WTC11 (cell line): ENCODE measurements at regions of chr17 and their contacts with region 1.

Region 1: GRCh38 chr17:68613739-68614298 is 12.7 kb upstream of the FAM20A start:
- DNase-seq: peak; percentile 58
- ATAC-seq: peak; percentile 100
- H3K4me3 Mint-ChIP-seq: no peak overlapping the region
- H3K27ac Mint-ChIP-seq: 0 out of 2 replicates have a peak overlapping the region, but pooled peaks have one; percentile 79
- H3K4me1 Mint-ChIP-seq: peaks cover 7% of the 10 kb centered on the region
- H3K27me3 Mint-ChIP-seq: no peaks in the 10 kb centered on the region
- CTCF ChIP-seq: peak; percentile 68

Region 2: DNA sequence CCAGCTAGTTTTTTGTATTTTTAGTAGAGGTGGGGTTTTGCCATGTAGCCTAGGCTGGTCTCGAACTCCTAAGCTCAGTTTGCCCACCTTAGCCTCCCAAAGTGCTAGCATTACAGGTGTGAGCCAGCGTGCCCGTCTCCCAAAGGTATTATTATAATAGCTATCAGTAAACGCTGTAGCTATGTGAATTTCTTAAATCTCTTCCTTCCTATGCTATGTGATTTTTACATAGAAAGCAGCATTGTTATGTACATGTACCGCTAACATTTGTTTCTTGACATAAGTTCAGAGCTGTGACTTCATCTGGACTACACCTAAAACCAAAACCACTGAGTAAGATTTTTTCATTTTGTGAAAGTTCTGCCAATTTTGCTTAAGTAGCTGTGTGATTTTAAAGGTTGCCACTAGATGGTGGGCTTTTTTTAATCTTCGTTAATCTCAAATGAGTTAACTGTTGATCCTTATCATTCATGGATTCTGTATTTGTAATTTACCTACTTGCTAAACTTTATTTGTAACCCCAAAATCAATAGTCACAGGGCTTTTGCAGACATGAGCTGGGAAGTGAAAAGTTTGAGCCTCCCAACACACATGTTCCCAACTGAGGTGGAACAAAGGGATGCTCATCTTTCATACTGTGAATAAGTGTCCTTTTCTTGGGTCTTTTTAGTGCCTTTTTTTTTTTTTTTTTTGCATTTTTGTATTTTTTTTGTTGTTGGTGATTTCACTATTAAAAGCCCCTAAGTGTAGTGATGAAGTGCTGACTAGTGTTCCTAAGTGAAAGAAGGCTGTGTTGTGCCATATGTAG is 79.7 kb before region 1 on chr17:
- CTCF ChIA-PET with region 1: interaction called, 46 read pairs
- POLR2A ChIA-PET with region 1: no interaction called
- DNase-seq: no peak
- ATAC-seq: no peak
- H3K4me3 Mint-ChIP-seq: no peak overlapping the region
- H3K27ac Mint-ChIP-seq: peak overlapping the region; percentile 76
- H3K4me1 Mint-ChIP-seq: no peaks in the 10 kb centered on the region
- H3K27me3 Mint-ChIP-seq: no peaks in the 10 kb centered on the region
- CTCF ChIP-seq: no peak

Region 3: GRCh38 chr17:68539548-68540467 is 74.0 kb before region 1 on chr17:
- CTCF ChIA-PET with region 1: interaction called, 19 read pairs
- POLR2A ChIA-PET with region 1: no interaction called
- DNase-seq: no peak
- ATAC-seq: peak; percentile 81
- H3K4me3 Mint-ChIP-seq: no peak overlapping the region
- H3K27ac Mint-ChIP-seq: no peak overlapping the region
- H3K4me1 Mint-ChIP-seq: no peaks in the 10 kb centered on the region
- H3K27me3 Mint-ChIP-seq: no peaks in the 10 kb centered on the region
- CTCF ChIP-seq: no peak

Region 4: GRCh38 chr17:68600067-68600930 is 13.5 kb before region 1 on chr17:
- CTCF ChIA-PET with region 1: interaction called, 21 read pairs
- POLR2A ChIA-PET with region 1: no interaction called
- DNase-seq: peak; percentile 81
- ATAC-seq: peak; percentile 77
- H3K4me3 Mint-ChIP-seq: peak overlapping the region; percentile 87
- H3K27ac Mint-ChIP-seq: no peak overlapping the region
- H3K4me1 Mint-ChIP-seq: peaks cover 41% of the 10 kb centered on the region
- H3K27me3 Mint-ChIP-seq: peaks cover 47% of the 10 kb centered on the region
- CTCF ChIP-seq: no peak

Region 5: GRCh38 chr17:68627956-68628575 is 14.2 kb after region 1 on chr17:
- CTCF ChIA-PET with region 1: interaction called, 11 read pairs
- POLR2A ChIA-PET with region 1: interaction called, 7 read pairs
- DNase-seq: no peak
- ATAC-seq: peak; percentile 87
- H3K4me3 Mint-ChIP-seq: no peak overlapping the region
- H3K27ac Mint-ChIP-seq: no peak overlapping the region
- H3K4me1 Mint-ChIP-seq: 0 out of 2 replicates have a peak, but pooled peaks cover 4% of the 10 kb centered on the region
- H3K27me3 Mint-ChIP-seq: no peaks in the 10 kb centered on the region
- CTCF ChIP-seq: no peak

Region 6: DNA sequence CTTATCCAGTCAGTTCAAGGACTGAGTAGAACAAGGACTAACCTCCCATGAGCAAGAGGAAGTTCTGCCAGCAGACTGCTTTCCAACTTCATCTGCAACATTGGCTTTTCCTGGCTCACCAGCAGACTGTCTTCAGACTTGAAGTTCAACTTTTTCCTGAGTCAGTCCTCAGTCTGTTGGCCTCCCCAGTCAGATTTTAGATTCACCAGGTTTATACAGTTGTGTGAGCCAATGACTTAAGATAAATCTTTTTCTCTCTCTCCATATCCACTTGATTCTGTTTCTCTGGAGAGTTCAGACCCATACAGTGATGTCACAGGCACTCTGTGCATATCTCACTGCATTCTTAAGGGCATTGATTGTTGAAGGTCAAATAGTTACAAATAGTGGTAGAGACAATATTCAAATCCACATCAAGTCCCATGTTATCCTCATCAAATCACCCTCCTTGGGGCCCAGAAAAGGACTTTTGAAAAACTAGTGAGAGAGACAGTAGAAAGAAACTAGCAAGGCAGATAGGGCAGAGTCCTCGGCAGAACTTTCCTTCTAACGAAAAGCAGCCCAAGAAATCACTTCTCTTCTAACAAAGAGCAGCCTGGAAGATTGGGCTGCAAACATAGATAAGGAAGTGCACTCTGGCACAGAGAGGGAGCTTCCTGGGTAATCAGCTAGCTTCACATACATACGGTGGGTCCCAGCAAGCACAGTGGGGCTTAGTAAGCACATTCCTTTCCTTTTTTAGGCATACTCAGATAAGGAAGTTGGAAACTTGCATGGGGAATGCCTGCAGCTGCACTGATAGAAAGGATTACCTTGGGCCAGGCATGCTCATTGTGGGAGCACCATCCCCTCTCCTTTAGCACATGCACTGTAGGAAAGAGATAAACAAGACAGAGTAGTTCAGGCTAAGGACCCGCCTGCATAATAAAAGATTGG is 119.7 kb after region 1 on chr17:
- CTCF ChIA-PET with region 1: interaction called, 11 read pairs
- POLR2A ChIA-PET with region 1: no interaction called
- DNase-seq: no peak
- ATAC-seq: peak; percentile 54
- H3K4me3 Mint-ChIP-seq: no peak overlapping the region
- H3K27ac Mint-ChIP-seq: peak overlapping the region; percentile 47
- H3K4me1 Mint-ChIP-seq: peaks cover 46% of the 10 kb centered on the region
- H3K27me3 Mint-ChIP-seq: no peaks in the 10 kb centered on the region; the same call in none of the 2 replicates
- CTCF ChIP-seq: no peak

Region 7: GRCh38 chr17:69093279-69093789 is 479.5 kb after region 1 on chr17:
- CTCF ChIA-PET with region 1: no interaction called
- POLR2A ChIA-PET with region 1: no interaction called
- DNase-seq: no peak
- ATAC-seq: no peak
- H3K4me3 Mint-ChIP-seq: no peak overlapping the region
- H3K27ac Mint-ChIP-seq: no peak overlapping the region
- H3K4me1 Mint-ChIP-seq: peaks cover 6% of the 10 kb centered on the region
- H3K27me3 Mint-ChIP-seq: no peaks in the 10 kb centered on the region
- CTCF ChIP-seq: no peak